Aorta (tissue), 5 donors: ENCODE measurements at regions of chr21 and their contacts with region 1.

Region 1: DNA sequence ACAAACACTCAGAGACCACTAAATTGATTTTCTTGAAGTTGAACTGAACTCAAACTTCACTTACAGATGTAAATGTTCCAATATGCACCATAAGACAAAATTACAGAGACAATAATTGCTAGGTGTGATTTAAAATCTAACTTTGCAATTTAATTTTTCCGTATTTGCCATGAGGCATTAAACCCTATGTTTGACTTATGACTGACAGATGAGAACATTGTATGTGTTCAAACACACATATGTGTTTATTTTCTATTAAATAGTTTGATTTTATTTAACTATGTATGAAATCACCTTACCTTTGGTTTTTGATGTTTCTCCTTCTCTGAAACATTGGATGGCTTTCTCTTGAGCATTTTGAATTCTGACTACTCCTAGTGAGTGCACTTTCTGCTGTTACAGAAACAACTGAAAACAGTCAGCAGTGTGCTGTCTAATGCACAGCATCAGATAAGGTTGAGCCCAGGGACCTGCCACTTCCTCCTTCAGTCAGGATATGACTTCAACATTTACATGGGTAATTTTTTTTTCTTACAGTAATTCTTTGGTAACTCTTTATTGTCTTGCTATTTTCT is at the start of gene SAMSN1:
- DNase-seq: peak in 1 of 2 donors; percentile 64
- ATAC-seq: no peak
- H3K4me3 ChIP-seq: no peak within 1 kb of the TSS
- H3K27ac ChIP-seq: no peak within 1 kb of the TSS
- H3K4me1 ChIP-seq: no peaks in the 10 kb centered on the region
- H3K27me3 ChIP-seq: no peaks in the 10 kb centered on the region
- total RNA-seq, gene SAMSN1: 14.4 to 16.1 TPM

Region 2: DNA sequence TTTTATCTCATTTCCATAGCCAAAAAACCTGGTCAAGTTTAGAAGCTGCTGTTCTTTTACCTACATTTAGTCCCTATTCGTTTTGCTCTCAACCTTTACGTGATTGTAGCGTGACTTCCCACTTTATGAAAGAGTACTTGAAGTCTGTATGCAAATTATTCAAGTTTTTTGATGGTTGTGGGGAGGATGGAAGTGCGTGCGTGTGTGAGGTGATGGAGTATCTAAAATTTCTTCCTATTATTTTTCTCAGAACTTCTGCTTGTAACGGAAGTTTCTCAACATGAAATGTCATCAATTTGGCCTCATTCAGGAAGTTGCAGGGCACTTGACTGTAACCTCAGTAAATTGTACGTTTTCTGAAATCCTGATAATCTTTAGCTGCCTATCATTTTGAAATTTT is 63.8 kb before region 1 on chr21:
- intact Hi-C with region 1: loop called in 1 of 2 experiments (anchors 10 kb)
- DNase-seq: no peak
- ATAC-seq: no peak
- H3K4me3 ChIP-seq: no peak overlapping the region
- H3K27ac ChIP-seq: no peak overlapping the region
- H3K4me1 ChIP-seq: no peaks in the 10 kb centered on the region
- H3K27me3 ChIP-seq: no peaks in the 10 kb centered on the region

Region 3: DNA sequence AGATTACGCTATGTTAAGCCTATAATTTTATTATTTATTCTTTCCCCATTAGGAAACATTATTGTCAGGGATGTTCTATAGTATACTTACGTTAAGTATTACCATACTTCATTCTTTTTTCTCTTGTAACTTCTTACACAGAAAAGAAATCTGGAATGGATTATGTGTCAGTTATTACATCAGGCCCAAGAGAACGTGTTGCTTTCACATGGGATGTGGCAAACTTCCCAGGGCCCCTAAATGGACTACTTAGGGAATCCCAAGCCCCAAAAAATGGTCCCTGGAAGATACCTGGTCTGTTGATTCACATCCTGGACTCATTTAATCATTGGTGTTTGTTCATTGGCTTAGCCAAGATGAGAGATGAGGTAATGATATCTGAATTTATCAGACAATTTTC is 269.0 kb after region 1 on chr21:
- intact Hi-C with region 1: no loop called
- DNase-seq: no peak
- ATAC-seq: no peak
- H3K4me3 ChIP-seq: no peak overlapping the region
- H3K27ac ChIP-seq: no peak overlapping the region
- H3K4me1 ChIP-seq: no peaks in the 10 kb centered on the region
- H3K27me3 ChIP-seq: no peaks in the 10 kb centered on the region